IMR-90 (cell line): ENCODE measurements at regions of chr22 and their contacts with region 1.

Region 1: GRCh38 chr22:41171996-41172395 is 33.1 kb upstream of the L3MBTL2 start:
- DNase-seq: no peak
- ATAC-seq: no peak
- H3K4me3 ChIP-seq: no peak overlapping the region
- H3K27ac ChIP-seq: no peak overlapping the region
- H3K4me1 ChIP-seq: no peaks in the 10 kb centered on the region
- H3K27me3 ChIP-seq: no peaks in the 10 kb centered on the region
- CTCF ChIP-seq: no peak
- POLR2A ChIP-seq: no peak
- RAD21 ChIP-seq: no peak

Region 2: GRCh38 chr22:41132550-41132949 is 39.4 kb before region 1 on chr22:
- CTCF ChIA-PET with region 1: no interaction called
- POLR2A ChIA-PET with region 1: no interaction called
- dilution Hi-C with region 1: no loop called
- in situ Hi-C with region 1: loop called (anchors 5 kb)
- intact Hi-C with region 1: loop called (anchors 5 kb)
- DNase-seq: peak; percentile 2
- ATAC-seq: no peak
- H3K4me3 ChIP-seq: no peak overlapping the region
- H3K27ac ChIP-seq: no peak overlapping the region
- H3K4me1 ChIP-seq: no peaks in the 10 kb centered on the region
- H3K27me3 ChIP-seq: no peaks in the 10 kb centered on the region
- CTCF ChIP-seq: no peak
- POLR2A ChIP-seq: no peak
- RAD21 ChIP-seq: no peak